ENCODE measurements at regions of chr7 and their contacts with region 1.

Region 1: DNA sequence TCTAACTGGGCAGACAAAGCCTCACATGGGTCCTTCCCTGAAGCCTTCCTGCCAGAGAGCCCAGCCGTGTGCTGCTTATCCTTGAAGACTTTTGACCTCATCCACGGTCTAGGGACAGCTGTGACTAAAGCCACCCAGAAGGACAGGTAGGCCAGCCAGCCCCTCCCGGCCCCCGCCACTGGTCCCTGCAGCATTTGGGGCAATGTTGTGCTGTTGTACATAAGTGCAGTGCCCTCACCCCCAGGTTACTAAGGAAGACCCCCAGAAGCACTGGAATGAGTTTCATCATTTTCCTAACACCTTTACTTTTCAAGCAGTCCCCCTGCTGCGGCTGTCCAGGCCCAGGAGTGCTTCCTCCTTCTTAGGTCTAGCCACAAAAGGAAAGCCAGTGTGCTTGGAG is 43.0 kb downstream of the TMEM209 start:
- DNase-seq: no peak
- ATAC-seq: no peak
- H3K4me3 ChIP-seq: no peak overlapping the region
- H3K27ac ChIP-seq: no peak overlapping the region
- H3K4me1 ChIP-seq: no peaks in the 10 kb centered on the region
- H3K27me3 ChIP-seq: no peaks in the 10 kb centered on the region
- CTCF ChIP-seq: no peak

Region 2: DNA sequence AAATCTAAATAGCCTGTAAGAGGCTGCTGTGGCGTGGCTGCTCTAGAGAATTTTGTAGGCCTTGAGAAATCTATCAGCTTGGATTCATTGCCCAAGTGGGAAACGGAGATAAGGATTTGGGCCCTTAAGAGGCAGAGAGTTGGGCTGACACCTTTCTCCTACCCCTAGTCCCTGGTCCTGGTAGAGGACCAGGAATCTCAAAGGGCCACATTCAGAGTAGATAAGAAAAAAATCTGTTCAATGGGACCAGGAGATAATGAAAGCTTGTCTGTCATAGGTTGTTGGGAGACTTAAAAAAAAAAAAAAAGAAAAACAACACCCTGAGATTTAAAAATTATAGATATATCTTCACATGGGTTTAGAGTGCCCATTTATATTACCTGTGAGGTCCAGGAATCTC is 25.2 kb after region 1 on chr7:
- CTCF ChIA-PET with region 1: no interaction called
- POLR2A ChIA-PET with region 1: interaction called, 10 read pairs
- in situ Hi-C with region 1: no loop called
- intact Hi-C with region 1: no loop called
- DNase-seq: no peak
- ATAC-seq: no peak
- H3K4me3 ChIP-seq: no peak overlapping the region
- H3K27ac ChIP-seq: no peak overlapping the region
- H3K4me1 ChIP-seq: no peaks in the 10 kb centered on the region
- H3K27me3 ChIP-seq: no peaks in the 10 kb centered on the region
- CTCF ChIP-seq: no peak

Measured in Panc1 (cell line).